ENCODE measurements at regions of chr6 and their contacts with region 1.

Region 1: GRCh38 chr6:79453558-79454042 is 83.6 kb downstream of the LCA5 start:
- DNase-seq: peak; percentile 89
- H3K4me3 Mint-ChIP-seq: peak overlapping the region; percentile 61
- H3K27ac Mint-ChIP-seq: peak overlapping the region; percentile 94
- H3K4me1 Mint-ChIP-seq: peaks cover 33% of the 10 kb centered on the region
- H3K27me3 Mint-ChIP-seq: no peaks in the 10 kb centered on the region
- CTCF ChIP-seq: no peak

Region 2: GRCh38 chr6:79239538-79240168 is 213.9 kb before region 1 on chr6:
- CTCF ChIA-PET with region 1: interaction called, 3 read pairs
- POLR2A ChIA-PET with region 1: interaction called, 16 read pairs
- intact Hi-C with region 1: loop called (anchors 5 kb)
- DNase-seq: no peak
- H3K4me3 Mint-ChIP-seq: no peak overlapping the region
- H3K27ac Mint-ChIP-seq: peak overlapping the region; percentile 80
- H3K4me1 Mint-ChIP-seq: peaks cover 33% of the 10 kb centered on the region
- H3K27me3 Mint-ChIP-seq: no peaks in the 10 kb centered on the region
- CTCF ChIP-seq: no peak

Region 3: DNA sequence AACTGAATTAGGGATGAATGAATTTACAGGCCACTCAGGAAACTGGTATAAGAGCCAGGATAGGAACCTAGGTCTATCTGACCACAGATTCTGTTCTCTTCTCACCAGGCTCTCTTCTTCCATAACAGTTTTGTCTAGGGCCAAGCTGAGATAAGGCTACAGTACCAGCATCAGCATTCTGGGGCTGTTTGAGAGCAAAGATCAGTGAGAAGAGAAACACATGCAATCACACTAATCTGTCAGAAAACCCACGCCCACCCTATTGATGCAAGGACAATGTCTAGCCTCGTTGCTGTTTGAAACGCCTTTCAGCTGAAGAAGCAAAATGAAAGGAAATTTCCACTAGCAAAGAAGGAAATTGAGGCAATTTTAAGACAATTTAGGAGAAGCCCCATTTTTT is 54.1 kb before region 1 on chr6:
- CTCF ChIA-PET with region 1: no interaction called
- POLR2A ChIA-PET with region 1: no interaction called
- intact Hi-C with region 1: loop called (anchors 10 kb)
- DNase-seq: no peak
- H3K4me3 Mint-ChIP-seq: no peak overlapping the region
- H3K27ac Mint-ChIP-seq: no peak overlapping the region
- H3K4me1 Mint-ChIP-seq: no peaks in the 10 kb centered on the region
- H3K27me3 Mint-ChIP-seq: no peaks in the 10 kb centered on the region
- CTCF ChIP-seq: no peak

Region 4: GRCh38 chr6:79438030-79438429 is 15.6 kb before region 1 on chr6:
- CTCF ChIA-PET with region 1: interaction called, 5 read pairs
- POLR2A ChIA-PET with region 1: interaction called, 17 read pairs
- intact Hi-C with region 1: no loop called
- DNase-seq: peak; percentile 47
- H3K4me3 Mint-ChIP-seq: no peak overlapping the region
- H3K27ac Mint-ChIP-seq: peak overlapping the region; percentile 72
- H3K4me1 Mint-ChIP-seq: peaks cover 31% of the 10 kb centered on the region
- H3K27me3 Mint-ChIP-seq: no peaks in the 10 kb centered on the region
- CTCF ChIP-seq: no peak

Region 5: DNA sequence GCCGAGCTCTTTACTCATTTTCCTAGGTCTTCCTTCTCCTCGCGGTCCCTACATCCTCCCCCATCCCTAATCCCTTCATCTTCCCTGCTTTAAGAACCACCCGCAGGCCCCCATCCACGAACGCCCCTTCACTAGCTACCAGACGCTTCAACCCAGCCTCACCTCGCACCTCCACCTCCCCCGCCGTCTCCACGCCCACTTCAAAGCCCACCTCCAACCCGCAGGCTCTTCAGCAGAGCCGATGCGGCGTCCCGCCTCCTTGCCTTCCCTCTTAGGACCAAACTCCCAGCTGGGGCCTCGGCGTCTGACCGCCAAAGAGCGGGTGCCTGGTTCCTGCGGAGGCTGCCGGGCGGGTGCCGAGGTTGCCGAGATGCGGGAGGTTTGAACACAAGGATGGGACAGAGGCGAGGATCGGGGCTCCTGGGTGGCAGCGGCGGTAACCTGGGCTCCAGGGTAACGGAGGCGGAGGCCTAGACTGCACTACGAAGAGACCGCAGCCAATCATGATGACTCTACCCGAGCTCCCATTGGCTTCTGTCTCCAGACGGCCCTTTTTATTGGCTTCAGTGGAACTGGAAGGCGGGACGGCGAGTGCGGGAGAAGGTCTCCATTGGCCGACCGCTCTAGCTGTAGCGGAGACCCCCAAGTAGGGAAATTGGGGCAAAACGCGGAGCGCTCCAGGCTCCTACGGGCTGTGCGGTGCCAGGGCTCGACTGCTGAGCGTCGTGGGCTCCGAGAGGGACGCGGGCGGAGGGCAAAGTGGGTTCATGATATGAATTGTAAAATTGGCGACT is 83.6 kb after region 1 on chr6 and contains the start of gene LCA5:
- CTCF ChIA-PET with region 1: no interaction called
- POLR2A ChIA-PET with region 1: interaction called, 14 read pairs
- intact Hi-C with region 1: no loop called
- DNase-seq: peak; percentile 99
- H3K4me3 Mint-ChIP-seq: no peak within 1 kb of the TSS
- H3K27ac Mint-ChIP-seq: no peak within 1 kb of the TSS
- H3K4me1 Mint-ChIP-seq: peaks cover 8% of the 10 kb centered on the region
- H3K27me3 Mint-ChIP-seq: no peaks in the 10 kb centered on the region
- CTCF ChIP-seq: no peak
- total RNA-seq, gene LCA5: 4.5 TPM in 2 replicates